MCF 10A (cell line): ENCODE measurements at regions of chr17 and their contacts with region 1.

Region 1: DNA sequence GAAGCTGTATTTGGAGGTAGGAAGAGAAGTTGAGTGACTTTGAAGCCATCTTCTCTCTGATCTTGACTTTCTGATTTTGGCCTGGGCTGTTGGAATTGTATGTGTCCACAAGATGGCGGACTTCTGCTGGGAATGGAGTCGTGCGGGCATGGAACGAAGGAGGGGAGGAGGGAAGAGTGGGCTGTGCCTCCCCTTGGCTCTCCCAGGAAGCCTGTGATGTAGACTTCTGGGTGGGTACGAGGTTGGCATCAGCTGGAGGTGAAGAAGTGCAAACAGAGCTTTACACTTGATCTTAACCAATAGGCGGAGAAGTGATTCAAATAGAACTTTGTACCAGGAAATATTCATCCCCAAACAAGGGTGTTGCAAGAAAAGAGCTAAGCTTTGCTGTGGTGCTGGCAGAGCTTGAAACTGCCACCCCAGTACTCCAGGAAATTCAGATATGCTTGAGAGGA is 7.4 kb upstream of the TMEM220 start:
- DNase-seq: peak; percentile 65
- H3K4me3 Mint-ChIP-seq: no peak overlapping the region
- H3K27ac Mint-ChIP-seq: no peak overlapping the region
- H3K4me1 Mint-ChIP-seq: peaks cover 5% of the 10 kb centered on the region
- H3K27me3 Mint-ChIP-seq: peaks cover 72% of the 10 kb centered on the region
- CTCF ChIP-seq: peak; percentile 81

Region 2: GRCh38 chr17:10702574-10702973 is 34.6 kb before region 1 on chr17:
- CTCF ChIA-PET with region 1: interaction called, 10 read pairs
- POLR2A ChIA-PET with region 1: no interaction called
- intact Hi-C with region 1: no loop called
- DNase-seq: no peak
- H3K4me3 Mint-ChIP-seq: no peak overlapping the region
- H3K27ac Mint-ChIP-seq: no peak overlapping the region
- H3K4me1 Mint-ChIP-seq: peaks cover 5% of the 10 kb centered on the region
- H3K27me3 Mint-ChIP-seq: no peaks in the 10 kb centered on the region
- CTCF ChIP-seq: no peak

Region 3: DNA sequence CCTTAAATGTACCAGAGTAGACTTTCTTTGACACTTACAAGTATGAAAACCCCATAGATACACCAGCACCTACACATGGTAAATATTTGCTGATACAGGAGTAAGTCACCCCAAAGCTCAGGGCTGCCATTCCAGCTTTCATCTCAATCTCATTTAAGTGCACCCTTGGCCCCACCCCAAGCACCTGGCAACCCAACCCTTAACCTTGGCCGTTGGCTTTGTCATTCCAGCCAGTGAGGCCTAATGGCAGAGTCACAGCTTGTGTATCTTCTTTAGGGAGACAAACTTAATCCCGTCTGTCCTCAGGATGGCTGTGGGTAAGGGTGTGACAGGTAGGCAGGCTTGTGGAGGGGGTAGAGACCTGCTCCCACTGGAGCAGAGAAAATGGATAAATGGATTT is 24.1 kb after region 1 on chr17:
- CTCF ChIA-PET with region 1: interaction called, 12 read pairs
- POLR2A ChIA-PET with region 1: no interaction called
- intact Hi-C with region 1: no loop called
- DNase-seq: no peak
- H3K4me3 Mint-ChIP-seq: no peak overlapping the region
- H3K27ac Mint-ChIP-seq: no peak overlapping the region
- H3K4me1 Mint-ChIP-seq: peaks cover 11% of the 10 kb centered on the region
- H3K27me3 Mint-ChIP-seq: peaks cover 1% of the 10 kb centered on the region
- CTCF ChIP-seq: no peak

Region 4: DNA sequence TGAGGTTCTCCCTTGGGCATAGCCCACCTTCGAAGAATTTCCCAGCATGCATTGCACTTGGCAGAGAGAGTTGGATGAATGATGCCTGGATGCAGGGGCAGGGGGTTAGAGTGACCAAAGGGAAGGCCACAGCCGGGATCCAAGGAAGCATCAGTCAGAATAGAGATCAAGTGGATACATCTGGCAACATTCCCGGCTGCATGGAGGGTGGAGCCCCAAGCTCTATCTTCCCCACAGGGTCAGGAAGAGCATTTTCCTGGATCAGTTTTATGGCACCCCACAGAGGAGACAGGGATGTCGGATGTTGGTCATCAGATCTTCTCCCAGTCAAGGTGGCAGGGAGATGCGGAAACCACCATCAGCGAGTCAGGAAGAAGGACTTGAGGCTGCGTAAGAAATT is 87.7 kb after region 1 on chr17:
- CTCF ChIA-PET with region 1: interaction called, 12 read pairs
- POLR2A ChIA-PET with region 1: no interaction called
- intact Hi-C with region 1: no loop called
- DNase-seq: no peak
- H3K4me3 Mint-ChIP-seq: no peak overlapping the region
- H3K27ac Mint-ChIP-seq: no peak overlapping the region
- H3K4me1 Mint-ChIP-seq: no peaks in the 10 kb centered on the region
- H3K27me3 Mint-ChIP-seq: peaks cover 25% of the 10 kb centered on the region
- CTCF ChIP-seq: no peak

Region 5: GRCh38 chr17:10875979-10876555 is 138.9 kb after region 1 on chr17:
- CTCF ChIA-PET with region 1: interaction called, 17 read pairs
- POLR2A ChIA-PET with region 1: no interaction called
- intact Hi-C with region 1: no loop called
- DNase-seq: peak; percentile 27
- H3K4me3 Mint-ChIP-seq: no peak overlapping the region
- H3K27ac Mint-ChIP-seq: no peak overlapping the region
- H3K4me1 Mint-ChIP-seq: peaks cover 9% of the 10 kb centered on the region
- H3K27me3 Mint-ChIP-seq: peaks cover 11% of the 10 kb centered on the region
- CTCF ChIP-seq: peak; percentile 75

Region 6: DNA sequence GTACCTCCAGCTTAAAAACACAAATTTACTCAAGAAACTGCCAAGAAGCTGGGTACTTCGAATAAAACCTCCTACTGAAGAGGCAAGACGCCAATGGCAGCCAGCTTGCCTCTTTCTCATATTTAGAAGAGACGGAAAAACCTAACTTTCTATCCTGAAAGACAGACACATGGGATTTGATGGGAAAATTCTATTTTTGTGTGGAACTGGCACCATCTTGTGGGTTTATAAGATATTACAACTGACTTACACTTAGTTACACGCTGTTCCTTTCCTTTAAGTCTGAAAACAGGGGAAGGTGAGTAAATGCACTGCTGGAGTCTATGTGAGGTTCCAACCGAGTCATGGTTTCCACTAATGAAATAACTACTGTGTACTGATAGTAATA is 1249.7 kb after region 1 on chr17:
- CTCF ChIA-PET with region 1: interaction called, 16 read pairs
- POLR2A ChIA-PET with region 1: no interaction called
- intact Hi-C with region 1: loop called (anchors 10 kb)
- DNase-seq: peak; percentile 61
- H3K4me3 Mint-ChIP-seq: no peak overlapping the region
- H3K27ac Mint-ChIP-seq: no peak overlapping the region
- H3K4me1 Mint-ChIP-seq: peaks cover 5% of the 10 kb centered on the region
- H3K27me3 Mint-ChIP-seq: no peaks in the 10 kb centered on the region
- CTCF ChIP-seq: peak; percentile 69